Esophagus muscularis mucosa (tissue), 4 donors: ENCODE measurements at regions of chr9 and their contacts with region 1.

Region 1: GRCh38 chr9:133030317-133031129 is at the start of gene GTF3C5:
- DNase-seq: peak; percentile 99
- H3K4me3 ChIP-seq: peak within 1 kb of the TSS; percentile 80 to 98 (median 86)
- H3K27ac ChIP-seq: peak within 1 kb of the TSS; percentile 86 to 93 (median 89)
- H3K4me1 ChIP-seq: peaks cover 30 to 57% (median 37%) of the 10 kb centered on the region in 4 donors
- H3K27me3 ChIP-seq: no peaks in the 10 kb centered on the region
- CTCF ChIP-seq: peak in 1 of 3 experiments; percentile 23
- EP300 ChIP-seq: no peak
- POLR2A ChIP-seq: peak; percentile 22
- total RNA-seq, gene GTF3C5: 38.9 to 58.1 (median 42.4) TPM

Region 2: GRCh38 chr9:132997591-132997990 is 32.9 kb before region 1 on chr9:
- intact Hi-C with region 1: no loop called
- DNase-seq: no peak
- H3K4me3 ChIP-seq: no peak overlapping the region
- H3K27ac ChIP-seq: no peak overlapping the region
- H3K4me1 ChIP-seq: no peaks in the 10 kb centered on the region
- H3K27me3 ChIP-seq: peaks cover 0 to 88% (median 8%) of the 10 kb centered on the region in 4 donors
- CTCF ChIP-seq: no peak
- EP300 ChIP-seq: no peak
- POLR2A ChIP-seq: no peak

Region 3: DNA sequence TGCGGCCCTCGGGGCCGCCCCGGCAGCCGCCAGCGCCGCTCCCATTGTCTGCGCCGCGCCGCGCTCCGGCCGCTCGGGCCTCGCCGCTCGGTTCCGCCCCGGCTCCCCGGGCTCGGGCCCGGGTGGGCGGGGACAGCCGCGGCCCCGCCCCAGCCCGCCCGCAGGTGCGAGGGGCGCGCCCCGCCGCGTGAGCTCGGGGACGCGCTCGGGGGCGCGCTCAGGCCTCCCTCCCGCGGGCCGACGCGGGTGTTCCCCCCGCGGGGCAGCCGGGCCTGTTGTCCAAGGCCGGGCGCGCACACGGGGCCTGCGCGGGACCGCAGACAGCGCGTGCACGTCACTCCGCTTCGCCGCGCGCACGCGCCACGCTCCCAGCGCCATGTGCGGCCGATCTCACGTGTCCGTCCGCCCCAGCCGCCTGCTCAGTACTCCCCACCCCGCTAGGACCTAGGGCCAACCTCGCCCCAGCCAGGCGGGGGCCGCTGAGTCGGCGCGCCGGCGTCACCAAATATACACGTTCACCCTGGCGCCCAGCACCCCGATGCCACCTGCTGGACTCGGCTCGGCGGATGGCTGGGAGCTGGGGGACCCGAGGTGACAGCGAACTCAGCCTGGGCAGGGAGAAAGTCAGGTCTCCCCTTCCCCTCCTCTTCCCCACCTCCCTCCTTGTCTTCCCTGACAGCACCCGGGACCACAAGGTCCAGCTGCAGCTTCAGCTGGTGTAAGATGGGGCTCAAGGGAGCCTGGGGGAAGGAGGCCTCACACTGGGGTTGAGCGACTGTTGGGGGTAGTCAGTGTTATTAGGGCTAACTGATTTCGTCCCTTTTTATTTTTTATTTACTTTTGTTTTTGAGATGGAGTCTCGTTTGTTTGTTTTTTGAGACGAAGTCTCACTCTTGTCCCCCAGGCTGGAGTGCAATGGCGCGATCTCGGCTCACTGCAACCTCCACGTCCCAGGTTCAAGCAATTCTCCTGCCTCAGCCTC is 118.9 kb after region 1 on chr9:
- intact Hi-C with region 1: loop called (anchors 5 kb)
- DNase-seq: peak; percentile 98
- H3K4me3 ChIP-seq: peak overlapping the region; percentile 68 to 75 (median 74)
- H3K27ac ChIP-seq: peak overlapping the region; percentile 85 to 94 (median 88)
- H3K4me1 ChIP-seq: peaks cover 27 to 53% (median 38%) of the 10 kb centered on the region in 4 donors
- H3K27me3 ChIP-seq: no peaks in the 10 kb centered on the region
- CTCF ChIP-seq: peak; percentile 15 to 26 (median 23)
- EP300 ChIP-seq: no peak
- POLR2A ChIP-seq: no peak